WTC11 (cell line): ENCODE measurements at regions of chr5 and their contacts with region 1.

Region 1: GRCh38 chr5:115634343-115635132 is 8.7 kb upstream of the TMED7 start:
- DNase-seq: peak; percentile 92
- ATAC-seq: peak; percentile 84
- H3K4me3 Mint-ChIP-seq: peak overlapping the region; percentile 66
- H3K27ac Mint-ChIP-seq: peak overlapping the region; percentile 96
- H3K4me1 Mint-ChIP-seq: peaks cover 56% of the 10 kb centered on the region
- H3K27me3 Mint-ChIP-seq: no peaks in the 10 kb centered on the region
- CTCF ChIP-seq: peak; percentile 80

Region 2: GRCh38 chr5:115774684-115775083 is 140.1 kb after region 1 on chr5:
- CTCF ChIA-PET with region 1: interaction called, 19 read pairs
- POLR2A ChIA-PET with region 1: no interaction called
- DNase-seq: no peak
- ATAC-seq: no peak
- H3K4me3 Mint-ChIP-seq: no peak overlapping the region
- H3K27ac Mint-ChIP-seq: no peak overlapping the region
- H3K4me1 Mint-ChIP-seq: peaks cover 11% of the 10 kb centered on the region
- H3K27me3 Mint-ChIP-seq: peaks cover 3% of the 10 kb centered on the region; the same call in 1 of the 2 replicates
- CTCF ChIP-seq: no peak

Region 3: GRCh38 chr5:115831163-115831768 is 196.7 kb after region 1 on chr5:
- CTCF ChIA-PET with region 1: interaction called, 25 read pairs
- POLR2A ChIA-PET with region 1: no interaction called
- DNase-seq: no peak
- ATAC-seq: peak; percentile 50; the same call in 1 of the 2 replicates
- H3K4me3 Mint-ChIP-seq: no peak overlapping the region
- H3K27ac Mint-ChIP-seq: no peak overlapping the region
- H3K4me1 Mint-ChIP-seq: no peaks in the 10 kb centered on the region
- H3K27me3 Mint-ChIP-seq: no peaks in the 10 kb centered on the region
- CTCF ChIP-seq: peak; percentile 69